T-cell (primary cell): ENCODE measurements at regions of chr4 and their contacts with region 1.

Region 1: GRCh38 chr4:74376888-74377483 is 12.0 kb downstream of the EREG start:
- DNase-seq: peak in 1 of 35 experiments; percentile 67
- ATAC-seq: peak in 2 of 4 experiments; percentile 64 to 73
- H3K4me3 ChIP-seq: no peak overlapping the region
- H3K4me3 Mint-ChIP-seq: no peak overlapping the region
- H3K27ac ChIP-seq: no peak overlapping the region
- H3K27ac Mint-ChIP-seq: no peak overlapping the region
- H3K4me1 ChIP-seq: no peaks in the 10 kb centered on the region
- H3K4me1 Mint-ChIP-seq: no peaks in the 10 kb centered on the region
- H3K27me3 ChIP-seq: no peaks in the 10 kb centered on the region
- H3K27me3 Mint-ChIP-seq: peaks cover 5 to 8% of the 10 kb centered on the region in 2 donors

Region 2: GRCh38 chr4:74255096-74255495 is 121.9 kb before region 1 on chr4:
- CTCF ChIA-PET with region 1: interaction called in 1 of 2 experiments, 11 read pairs
- POLR2A ChIA-PET with region 1: no interaction called
- DNase-seq: no peak
- ATAC-seq: no peak
- H3K4me3 ChIP-seq: no peak overlapping the region
- H3K4me3 Mint-ChIP-seq: no peak overlapping the region
- H3K27ac ChIP-seq: no peak overlapping the region
- H3K27ac Mint-ChIP-seq: no peak overlapping the region
- H3K4me1 ChIP-seq: no peaks in the 10 kb centered on the region
- H3K4me1 Mint-ChIP-seq: no peaks in the 10 kb centered on the region
- H3K27me3 ChIP-seq: peaks cover 0 to 4% of the 10 kb centered on the region in 2 experiments
- H3K27me3 Mint-ChIP-seq: no peaks in the 10 kb centered on the region

Region 3: DNA sequence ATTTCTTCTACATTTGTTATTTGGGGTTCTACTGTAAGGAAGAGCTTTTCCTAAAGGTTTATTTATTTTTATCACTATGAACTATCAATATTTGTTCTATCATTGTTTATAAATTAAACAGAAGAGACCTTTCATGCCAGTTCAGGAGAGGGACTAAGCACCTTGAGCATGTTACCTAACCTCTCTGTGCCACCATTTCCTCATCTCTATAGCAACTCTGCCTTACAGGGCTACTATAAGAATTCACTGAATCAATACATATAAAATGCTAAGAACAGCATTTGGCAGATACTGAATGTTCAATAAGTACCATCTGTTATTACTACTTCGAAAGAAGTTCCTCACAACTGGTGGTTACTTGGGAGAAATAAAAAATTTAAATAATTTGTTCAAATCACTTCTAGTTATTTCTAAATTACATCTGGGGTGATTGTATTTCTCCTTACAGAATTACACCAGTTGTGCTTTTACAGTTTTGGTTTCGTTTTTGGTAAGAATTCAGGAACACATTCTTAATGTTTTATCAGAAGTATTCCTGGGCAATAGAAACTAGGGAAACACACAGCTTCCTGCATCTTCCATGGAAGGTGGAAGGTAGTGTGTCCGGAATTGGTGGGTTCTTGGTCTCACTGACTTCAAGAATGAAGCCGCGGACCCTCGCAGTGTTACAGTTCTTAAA is 20.9 kb after region 1 on chr4:
- CTCF ChIA-PET with region 1: interaction called, 3 read pairs
- POLR2A ChIA-PET with region 1: interaction called in 1 of 2 experiments, 10 read pairs
- DNase-seq: peak in 1 of 35 experiments; percentile 60
- ATAC-seq: peak; percentile 64 to 81 (median 77)
- H3K4me3 ChIP-seq: peak overlapping the region; percentile 59 to 70
- H3K4me3 Mint-ChIP-seq: peak overlapping the region; percentile 94 to 96 (median 95)
- H3K27ac ChIP-seq: peak overlapping the region; percentile 84
- H3K27ac Mint-ChIP-seq: peak overlapping the region; percentile 98
- H3K4me1 ChIP-seq: no peaks in the 10 kb centered on the region
- H3K4me1 Mint-ChIP-seq: peaks cover 5 to 13% (median 7%) of the 10 kb centered on the region in 3 donors
- H3K27me3 ChIP-seq: no peaks in the 10 kb centered on the region
- H3K27me3 Mint-ChIP-seq: no peaks in the 10 kb centered on the region

Region 4: GRCh38 chr4:74531963-74532794 is 155.2 kb after region 1 on chr4:
- CTCF ChIA-PET with region 1: interaction called, 3 to 20 read pairs
- POLR2A ChIA-PET with region 1: no interaction called
- DNase-seq: peak in 2 of 35 experiments; percentile 6 to 59
- ATAC-seq: peak; percentile 37 to 57 (median 50)
- H3K4me3 ChIP-seq: no peak overlapping the region
- H3K4me3 Mint-ChIP-seq: no peak overlapping the region
- H3K27ac ChIP-seq: no peak overlapping the region
- H3K27ac Mint-ChIP-seq: no peak overlapping the region
- H3K4me1 ChIP-seq: no peaks in the 10 kb centered on the region
- H3K4me1 Mint-ChIP-seq: no peaks in the 10 kb centered on the region
- H3K27me3 ChIP-seq: no peaks in the 10 kb centered on the region
- H3K27me3 Mint-ChIP-seq: peaks cover 4 to 5% of the 10 kb centered on the region in 2 donors

Region 5: DNA sequence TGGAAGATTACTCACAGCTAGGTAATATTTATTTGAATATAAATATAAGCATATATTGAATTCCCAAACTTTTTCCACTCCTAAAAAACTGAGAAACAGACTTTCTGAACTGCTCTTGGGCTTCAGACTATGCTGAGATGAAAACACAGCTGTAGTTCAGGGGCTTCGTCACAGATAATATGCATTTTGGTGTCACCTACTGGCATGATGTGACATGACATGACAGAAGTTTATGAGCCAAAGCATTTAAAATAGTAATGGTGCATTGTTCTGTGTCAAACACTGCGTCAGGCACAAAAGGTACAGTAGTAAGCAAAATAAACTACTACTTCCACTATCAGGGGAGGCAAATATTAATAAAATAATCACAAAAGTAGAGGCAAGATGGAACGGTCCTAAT is 246.1 kb after region 1 on chr4:
- CTCF ChIA-PET with region 1: interaction called, 15 to 17 read pairs
- POLR2A ChIA-PET with region 1: no interaction called
- DNase-seq: peak in 8 of 35 experiments; percentile 0 to 51 (median 4)
- ATAC-seq: peak in 3 of 4 experiments; percentile 35 to 69 (median 53)
- H3K4me3 ChIP-seq: no peak overlapping the region
- H3K4me3 Mint-ChIP-seq: no peak overlapping the region
- H3K27ac ChIP-seq: no peak overlapping the region
- H3K27ac Mint-ChIP-seq: no peak overlapping the region
- H3K4me1 ChIP-seq: peaks cover 0 to 14% of the 10 kb centered on the region in 2 experiments
- H3K4me1 Mint-ChIP-seq: peaks cover 22 to 35% (median 23%) of the 10 kb centered on the region in 3 donors
- H3K27me3 ChIP-seq: no peaks in the 10 kb centered on the region
- H3K27me3 Mint-ChIP-seq: peaks cover 0 to 3% of the 10 kb centered on the region in 2 donors

Region 6: DNA sequence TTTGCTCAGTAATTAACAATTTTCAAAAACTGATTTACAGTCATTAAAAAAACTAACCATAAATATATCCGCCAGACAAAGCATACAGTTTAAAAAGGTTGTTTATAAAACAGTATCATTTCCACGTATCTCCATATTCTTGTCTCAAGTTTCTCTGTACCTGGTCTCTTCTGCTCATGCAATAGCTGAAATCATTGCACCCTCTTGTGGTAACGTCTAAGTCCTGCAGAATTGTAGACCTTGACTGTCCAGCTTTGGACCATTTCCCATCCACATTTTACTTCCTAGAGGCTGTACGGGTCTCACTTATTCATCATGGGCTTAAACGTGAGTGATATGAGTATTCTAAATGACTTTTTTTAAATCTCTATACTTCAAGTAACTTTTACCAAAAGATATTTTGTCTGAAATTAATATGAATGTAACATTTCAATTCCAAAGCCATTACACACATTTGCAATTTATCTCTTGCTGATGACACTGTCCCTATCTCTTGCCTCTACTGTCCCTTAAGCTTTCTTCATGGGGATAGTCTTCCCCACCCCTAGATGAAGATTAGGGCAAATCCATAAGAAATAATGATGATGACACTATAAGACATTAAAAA is 298.8 kb after region 1 on chr4:
- CTCF ChIA-PET with region 1: interaction called, 3 to 35 read pairs
- POLR2A ChIA-PET with region 1: no interaction called
- DNase-seq: peak in 2 of 35 experiments; percentile 3 to 52
- ATAC-seq: peak in 1 of 4 experiments; percentile 57
- H3K4me3 ChIP-seq: no peak overlapping the region
- H3K4me3 Mint-ChIP-seq: no peak overlapping the region
- H3K27ac ChIP-seq: no peak overlapping the region
- H3K27ac Mint-ChIP-seq: no peak overlapping the region
- H3K4me1 ChIP-seq: no peaks in the 10 kb centered on the region
- H3K4me1 Mint-ChIP-seq: peaks cover 2 to 6% (median 3%) of the 10 kb centered on the region in 3 donors
- H3K27me3 ChIP-seq: no peaks in the 10 kb centered on the region
- H3K27me3 Mint-ChIP-seq: peaks cover 6 to 10% of the 10 kb centered on the region in 2 donors

Region 7: GRCh38 chr4:74830925-74831324 is 453.9 kb after region 1 on chr4:
- CTCF ChIA-PET with region 1: no interaction called
- POLR2A ChIA-PET with region 1: interaction called in 1 of 2 experiments, 12 read pairs
- DNase-seq: no peak
- ATAC-seq: no peak
- H3K4me3 ChIP-seq: no peak overlapping the region
- H3K4me3 Mint-ChIP-seq: no peak overlapping the region
- H3K27ac ChIP-seq: no peak overlapping the region
- H3K27ac Mint-ChIP-seq: no peak overlapping the region
- H3K4me1 ChIP-seq: no peaks in the 10 kb centered on the region
- H3K4me1 Mint-ChIP-seq: no peaks in the 10 kb centered on the region
- H3K27me3 ChIP-seq: no peaks in the 10 kb centered on the region
- H3K27me3 Mint-ChIP-seq: no peaks in the 10 kb centered on the region